Naive thymus-derived CD4-positive, alpha-beta T cell (primary cell): ENCODE measurements at regions of chr11 and their contacts with region 1.

Region 1: GRCh38 chr11:57493507-57494503 is 21.7 kb downstream of the SLC43A1 start:
- DNase-seq: peak; percentile 51 to 77 (median 67)
- ATAC-seq: peak; percentile 89
- H3K4me3 ChIP-seq: no peak overlapping the region
- H3K4me3 Mint-ChIP-seq: no peak overlapping the region
- H3K27ac ChIP-seq: no peak overlapping the region
- H3K27ac Mint-ChIP-seq: peak overlapping the region in 1 of 9 donors; percentile 5
- H3K4me1 ChIP-seq: peaks cover 0 to 3% of the 10 kb centered on the region in 2 donors
- H3K4me1 Mint-ChIP-seq: peaks cover 0 to 11% (median 0%) of the 10 kb centered on the region in 7 donors
- H3K27me3 ChIP-seq: no peaks in the 10 kb centered on the region
- H3K27me3 Mint-ChIP-seq: peaks cover 0 to 3% (median 0%) of the 10 kb centered on the region in 5 donors

Region 2: GRCh38 chr11:57480409-57481137 is 13.2 kb before region 1 on chr11:
- CTCF ChIA-PET with region 1: interaction called, 28 read pairs
- POLR2A ChIA-PET with region 1: interaction called, 3 read pairs
- intact Hi-C with region 1: no loop called
- DNase-seq: peak in 8 of 9 donors; percentile 30 to 75 (median 49)
- ATAC-seq: peak; percentile 58
- H3K4me3 ChIP-seq: no peak overlapping the region
- H3K4me3 Mint-ChIP-seq: peak overlapping the region in 1 of 10 donors; percentile 15
- H3K27ac ChIP-seq: no peak overlapping the region
- H3K27ac Mint-ChIP-seq: peak overlapping the region in 1 of 9 donors; percentile 49
- H3K4me1 ChIP-seq: peaks cover 10 to 19% of the 10 kb centered on the region in 2 donors
- H3K4me1 Mint-ChIP-seq: peaks cover 0 to 28% (median 18%) of the 10 kb centered on the region in 7 donors
- H3K27me3 ChIP-seq: no peaks in the 10 kb centered on the region
- H3K27me3 Mint-ChIP-seq: peaks cover 0 to 67% (median 16%) of the 10 kb centered on the region in 5 donors

Region 3: GRCh38 chr11:57508341-57509170 is 14.8 kb after region 1 on chr11:
- CTCF ChIA-PET with region 1: interaction called, 16 read pairs
- POLR2A ChIA-PET with region 1: interaction called, 5 read pairs
- intact Hi-C with region 1: no loop called
- DNase-seq: no peak
- ATAC-seq: no peak
- H3K4me3 ChIP-seq: no peak overlapping the region
- H3K4me3 Mint-ChIP-seq: no peak overlapping the region
- H3K27ac ChIP-seq: no peak overlapping the region
- H3K27ac Mint-ChIP-seq: no peak overlapping the region
- H3K4me1 ChIP-seq: peaks cover 0 to 2% of the 10 kb centered on the region in 2 donors
- H3K4me1 Mint-ChIP-seq: peaks cover 16 to 28% (median 23%) of the 10 kb centered on the region in 7 donors
- H3K27me3 ChIP-seq: no peaks in the 10 kb centered on the region
- H3K27me3 Mint-ChIP-seq: no peaks in the 10 kb centered on the region

Region 4: GRCh38 chr11:57515332-57516060 is 21.7 kb after region 1 on chr11 and contains the start of gene SLC43A1:
- CTCF ChIA-PET with region 1: interaction called, 38 read pairs
- POLR2A ChIA-PET with region 1: interaction called, 6 read pairs
- intact Hi-C with region 1: loop called in 1 of 2 experiments (anchors 1 kb)
- DNase-seq: peak in 2 of 9 donors; percentile 17 to 54
- ATAC-seq: peak; percentile 33
- H3K4me3 ChIP-seq: peak within 1 kb of the TSS; percentile 63
- H3K4me3 Mint-ChIP-seq: peak within 1 kb of the TSS; percentile 95 to 99 (median 98)
- H3K27ac ChIP-seq: peak within 1 kb of the TSS; percentile 63
- H3K27ac Mint-ChIP-seq: peak within 1 kb of the TSS; percentile 69 to 93 (median 78)
- H3K4me1 ChIP-seq: peaks cover 5 to 7% of the 10 kb centered on the region in 2 donors
- H3K4me1 Mint-ChIP-seq: peaks cover 19 to 31% (median 29%) of the 10 kb centered on the region in 7 donors
- H3K27me3 ChIP-seq: no peaks in the 10 kb centered on the region
- H3K27me3 Mint-ChIP-seq: peaks cover 0 to 10% (median 0%) of the 10 kb centered on the region in 5 donors
- total RNA-seq, gene SLC43A1: 10.1 to 19.2 (median 16.3) TPM

Region 5: GRCh38 chr11:57523419-57523818 is 29.6 kb after region 1 on chr11:
- CTCF ChIA-PET with region 1: interaction called, 286 read pairs
- POLR2A ChIA-PET with region 1: interaction called, 11 read pairs
- intact Hi-C with region 1: loop called (anchors 1 kb)
- DNase-seq: no peak
- ATAC-seq: no peak
- H3K4me3 ChIP-seq: no peak overlapping the region
- H3K4me3 Mint-ChIP-seq: no peak overlapping the region
- H3K27ac ChIP-seq: no peak overlapping the region
- H3K27ac Mint-ChIP-seq: peak overlapping the region in 1 of 9 donors; percentile 1
- H3K4me1 ChIP-seq: peaks cover 0 to 8% of the 10 kb centered on the region in 2 donors
- H3K4me1 Mint-ChIP-seq: peaks cover 0 to 13% (median 10%) of the 10 kb centered on the region in 7 donors
- H3K27me3 ChIP-seq: no peaks in the 10 kb centered on the region
- H3K27me3 Mint-ChIP-seq: no peaks in the 10 kb centered on the region

Region 6: GRCh38 chr11:57644748-57645688 is 151.2 kb after region 1 on chr11:
- CTCF ChIA-PET with region 1: interaction called, 18 read pairs
- POLR2A ChIA-PET with region 1: interaction called, 6 read pairs
- intact Hi-C with region 1: loop called (anchors 1 kb)
- DNase-seq: peak; percentile 61 to 91 (median 85)
- ATAC-seq: peak; percentile 87
- H3K4me3 ChIP-seq: no peak overlapping the region
- H3K4me3 Mint-ChIP-seq: no peak overlapping the region
- H3K27ac ChIP-seq: no peak overlapping the region
- H3K27ac Mint-ChIP-seq: peak overlapping the region in 2 of 9 donors; percentile 36 to 56
- H3K4me1 ChIP-seq: peaks cover 11 to 14% of the 10 kb centered on the region in 2 donors
- H3K4me1 Mint-ChIP-seq: peaks cover 25 to 60% (median 41%) of the 10 kb centered on the region in 7 donors
- H3K27me3 ChIP-seq: peaks cover 10 to 18% of the 10 kb centered on the region in 2 donors
- H3K27me3 Mint-ChIP-seq: peaks cover 30 to 60% (median 47%) of the 10 kb centered on the region in 5 donors